Mammary epithelial cell (primary cell): ENCODE measurements at regions of chr17 and their contacts with region 1.

Region 1: GRCh38 chr17:7632492-7632894 is 2.6 kb downstream of the SHBG start:
- DNase-seq: peak; percentile 39
- H3K4me3 ChIP-seq: no peak overlapping the region
- H3K27ac ChIP-seq: no peak overlapping the region
- H3K4me1 ChIP-seq: peaks cover 2% of the 10 kb centered on the region
- H3K27me3 ChIP-seq: no peaks in the 10 kb centered on the region
- CTCF ChIP-seq: peak; percentile 61 to 77

Region 2: DNA sequence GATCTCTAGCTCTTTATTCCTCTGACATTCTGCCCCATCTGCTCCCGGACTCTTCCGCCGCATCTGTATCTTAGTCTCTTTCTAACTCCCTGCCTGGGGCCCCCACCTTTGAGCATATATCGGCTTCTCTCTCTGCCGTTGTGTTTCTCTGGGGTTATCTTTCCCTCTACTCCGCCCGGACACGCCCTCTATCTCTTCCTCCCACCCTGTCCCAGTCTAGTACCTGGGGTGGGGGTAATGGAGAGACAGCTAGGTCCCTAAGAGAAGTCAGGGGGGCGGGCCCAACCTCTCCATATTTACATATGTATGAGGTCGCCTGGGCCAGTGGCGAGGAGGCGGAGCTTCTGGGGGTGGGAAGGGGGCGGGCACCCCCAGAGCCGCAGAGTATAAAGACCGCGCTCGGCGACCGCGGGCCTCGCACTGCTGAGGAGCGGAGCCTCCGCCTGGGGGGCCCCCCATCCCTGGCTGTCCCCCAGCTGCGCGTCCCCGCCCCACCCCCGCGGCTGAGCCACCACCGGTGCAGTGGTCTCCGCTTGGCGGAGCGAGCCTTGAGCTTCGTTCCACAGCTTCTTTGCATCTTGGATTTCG is 18.1 kb after region 1 on chr17 and contains the start of gene ATP1B2:
- CTCF ChIA-PET with region 1: interaction called, 11 read pairs
- dilution Hi-C with region 1: no loop called
- in situ Hi-C with region 1: no loop called
- intact Hi-C with region 1: no loop called
- DNase-seq: peak; percentile 20
- H3K4me3 ChIP-seq: peak within 1 kb of the TSS in 2 of 3 experiments; percentile 34 to 36
- H3K27ac ChIP-seq: no peak within 1 kb of the TSS
- H3K4me1 ChIP-seq: no peaks in the 10 kb centered on the region
- H3K27me3 ChIP-seq: peaks cover 13% of the 10 kb centered on the region
- CTCF ChIP-seq: no peak
- total RNA-seq, gene ATP1B2: not detected